ENCODE measurements at regions of chr17 and their contacts with region 1.

Region 1: GRCh38 chr17:81428948-81429774 is 33.9 kb downstream of the BAHCC1 start:
- DNase-seq: peak; percentile 81
- ATAC-seq: peak; percentile 69
- H3K4me3 ChIP-seq: no peak overlapping the region
- H3K27ac ChIP-seq: no peak overlapping the region
- H3K4me1 ChIP-seq: peaks cover 12% of the 10 kb centered on the region
- H3K27me3 ChIP-seq: no peaks in the 10 kb centered on the region
- CTCF ChIP-seq: no peak

Region 2: GRCh38 chr17:81412490-81413093 is 16.6 kb before region 1 on chr17:
- CTCF ChIA-PET with region 1: no interaction called
- POLR2A ChIA-PET with region 1: no interaction called
- intact Hi-C with region 1: no loop called
- DNase-seq: no peak
- ATAC-seq: peak; percentile 65
- H3K4me3 ChIP-seq: no peak overlapping the region
- H3K27ac ChIP-seq: no peak overlapping the region
- H3K4me1 ChIP-seq: peaks cover 7% of the 10 kb centered on the region
- H3K27me3 ChIP-seq: no peaks in the 10 kb centered on the region
- CTCF ChIP-seq: no peak

Region 3: DNA sequence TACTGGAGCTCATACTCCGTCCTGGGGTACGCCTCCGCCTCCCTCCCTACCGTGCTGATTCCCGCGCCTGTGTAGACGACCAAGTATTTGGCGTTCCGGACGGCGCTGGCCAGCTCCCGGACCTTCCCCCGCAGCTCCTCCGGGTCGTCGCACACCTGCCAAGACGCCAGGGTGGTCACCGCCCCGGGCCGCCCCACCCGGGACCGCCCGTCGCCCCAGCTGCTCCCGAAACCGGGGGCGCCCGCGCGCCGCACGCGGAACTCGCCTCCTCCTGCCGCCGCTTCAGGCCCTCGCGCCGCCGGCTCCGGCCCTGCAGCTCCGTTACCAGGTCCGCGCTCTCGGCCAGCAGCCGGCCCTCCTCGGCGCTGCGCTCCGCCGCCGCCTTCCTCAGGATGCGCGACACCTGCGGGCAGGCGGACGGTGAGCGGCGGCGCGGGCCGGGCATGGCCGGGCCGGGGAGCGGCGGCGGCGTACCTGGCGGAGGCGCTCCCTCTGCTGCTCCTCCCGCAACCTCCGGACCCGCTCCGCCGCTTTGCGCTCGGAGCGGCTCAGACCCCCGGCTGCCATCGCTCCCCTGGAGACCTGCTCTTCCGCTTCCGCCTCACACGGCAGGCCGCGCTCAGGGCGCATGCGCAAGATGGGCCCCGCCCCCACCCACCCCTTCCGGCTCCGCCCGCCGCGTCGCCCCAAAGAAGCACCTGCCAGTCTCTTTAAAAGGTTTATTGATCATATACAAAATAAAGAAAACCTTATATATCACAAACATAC is 488.6 kb after region 1 on chr17 and contains the start of gene SIRT7:
- CTCF ChIA-PET with region 1: interaction called, 10 read pairs
- POLR2A ChIA-PET with region 1: no interaction called
- intact Hi-C with region 1: no loop called
- DNase-seq: peak; percentile 89
- ATAC-seq: peak; percentile 64
- H3K4me3 ChIP-seq: peak within 1 kb of the TSS; percentile 75
- H3K27ac ChIP-seq: peak within 1 kb of the TSS; percentile 33
- H3K4me1 ChIP-seq: peaks cover 36% of the 10 kb centered on the region
- H3K27me3 ChIP-seq: no peaks in the 10 kb centered on the region
- CTCF ChIP-seq: no peak
- total RNA-seq, gene SIRT7: 51.6 and 70.8 TPM in 2 replicates

Measured in PC-3 (cell line).